Adrenal gland (tissue), 19 donors: ENCODE measurements at regions of chr22 and their contacts with region 1.

Region 1: DNA sequence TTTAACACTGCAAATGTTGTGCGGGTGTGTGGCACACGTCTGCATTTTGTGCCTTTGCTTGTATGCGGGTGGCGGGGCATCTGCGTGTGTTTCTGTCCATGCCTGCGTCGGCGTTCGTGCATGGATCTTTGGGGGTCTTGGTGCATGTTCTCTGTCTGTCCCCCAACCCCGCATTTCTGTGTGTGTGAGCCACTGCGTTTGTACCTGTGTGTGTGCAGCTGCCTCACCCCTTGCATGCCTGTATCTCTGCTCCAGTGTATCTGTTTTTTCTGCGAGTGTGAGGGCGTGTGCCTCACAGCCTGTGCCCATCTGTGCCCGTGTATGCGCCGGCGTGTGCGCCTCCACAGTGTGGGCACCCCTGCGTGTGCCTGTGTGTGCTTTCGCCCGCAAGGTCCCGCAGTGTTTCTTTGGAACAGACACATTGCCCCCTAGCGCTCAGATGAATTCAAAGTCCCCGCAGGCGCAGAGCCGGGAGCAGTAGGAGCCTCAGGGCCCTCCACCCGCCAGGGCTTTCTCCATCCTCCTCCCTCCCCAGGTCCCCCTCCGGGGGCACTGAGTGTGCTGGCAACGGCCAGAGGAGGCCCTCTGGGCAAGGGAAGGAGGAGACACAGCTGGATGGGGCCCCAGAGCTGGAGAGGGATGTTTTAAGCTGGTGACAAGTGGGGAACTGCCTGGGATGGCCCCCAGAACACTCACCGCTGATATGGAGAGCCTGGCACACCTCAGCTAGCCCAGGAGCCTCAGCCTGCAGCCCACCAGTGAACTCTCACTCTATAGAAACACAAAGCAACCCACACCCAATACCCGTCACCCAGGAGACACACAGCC is 3.1 kb upstream of the MN1 start:
- DNase-seq: peak; percentile 64 to 79 (median 75)
- H3K4me3 ChIP-seq: no peak overlapping the region
- H3K27ac ChIP-seq: no peak overlapping the region
- H3K4me1 ChIP-seq: peaks cover 0 to 21% of the 10 kb centered on the region in 2 donors
- H3K27me3 ChIP-seq: peaks cover 13% of the 10 kb centered on the region
- CTCF ChIP-seq: peak; percentile 35 to 73 (median 68)
- POLR2A ChIP-seq: no peak

Region 2: DNA sequence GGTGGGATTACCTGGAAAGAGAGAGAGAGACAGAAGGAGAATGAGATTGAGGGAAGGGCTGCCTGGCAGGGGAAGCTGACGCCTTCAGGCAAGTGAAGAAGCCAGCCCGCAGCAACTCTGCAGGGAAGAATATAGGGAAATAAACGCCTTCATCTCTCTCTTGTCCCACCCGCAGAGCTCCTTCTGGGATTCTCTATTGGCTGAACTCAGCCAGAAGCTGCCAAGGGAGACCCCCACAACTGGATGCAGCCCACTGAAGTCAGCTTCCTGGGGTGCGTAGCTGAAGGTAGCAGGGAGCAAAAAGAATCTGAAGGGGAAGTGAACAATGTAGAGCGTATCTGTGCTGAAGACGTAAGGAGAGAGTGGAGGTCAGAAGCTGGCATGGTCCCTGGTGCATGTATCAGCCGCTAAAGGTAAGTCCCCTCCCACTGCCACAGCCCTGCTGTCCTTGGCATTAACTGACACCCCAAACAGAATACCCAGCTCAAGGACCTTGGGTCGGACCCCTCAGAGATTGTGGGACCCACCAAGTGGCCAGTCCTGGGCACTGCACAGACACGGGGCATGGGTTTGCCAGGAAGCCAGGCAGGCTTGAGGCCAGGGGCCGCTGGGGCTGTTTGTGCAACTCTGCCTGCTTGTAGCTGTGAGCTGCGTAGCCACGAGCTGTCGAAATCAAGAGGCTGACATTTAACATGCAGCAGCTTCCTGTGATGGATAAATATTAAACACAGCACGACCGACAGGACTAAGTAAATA is 473.0 kb before region 1 on chr22:
- intact Hi-C with region 1: no loop called
- DNase-seq: peak in 5 of 7 donors; percentile 28 to 58 (median 52)
- H3K4me3 ChIP-seq: no peak overlapping the region
- H3K27ac ChIP-seq: no peak overlapping the region
- H3K4me1 ChIP-seq: no peaks in the 10 kb centered on the region
- H3K27me3 ChIP-seq: peaks cover 3% of the 10 kb centered on the region
- CTCF ChIP-seq: peak in 5 of 6 experiments; percentile 8 to 41 (median 29)
- POLR2A ChIP-seq: no peak

Region 3: DNA sequence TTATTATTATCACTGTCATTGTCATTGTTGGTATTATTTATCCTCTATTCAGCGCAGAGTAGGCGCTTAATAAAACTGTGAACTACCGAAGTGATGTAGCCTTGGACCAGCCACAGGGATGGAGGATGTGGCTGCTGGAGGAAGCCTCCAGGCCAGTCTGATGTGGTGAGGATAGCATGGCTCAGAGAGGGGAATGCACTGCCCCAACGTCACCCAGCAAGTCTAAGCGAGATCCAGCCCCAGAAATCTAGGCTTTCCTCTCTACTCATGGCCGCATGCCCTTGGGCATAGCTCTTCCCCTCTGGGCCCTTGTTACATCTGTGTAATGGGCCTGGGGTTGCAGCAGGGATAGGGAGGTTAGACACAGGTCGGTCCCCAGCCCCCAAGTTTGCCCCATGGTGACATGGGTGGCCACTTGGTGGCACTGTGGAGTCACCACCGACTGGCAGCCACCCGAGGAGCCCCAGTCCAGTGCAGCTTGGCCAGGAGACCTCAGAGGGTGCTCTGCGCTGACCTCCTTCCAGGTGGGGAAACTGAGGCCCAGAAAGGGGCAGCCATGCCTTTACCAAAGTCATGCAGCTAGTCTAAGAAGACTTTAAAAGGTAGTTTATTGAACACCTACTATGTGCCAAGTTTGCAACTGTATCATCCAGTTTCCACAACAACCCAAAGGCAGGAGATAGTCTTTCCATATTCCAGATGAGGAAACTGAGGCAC is 398.9 kb before region 1 on chr22:
- intact Hi-C with region 1: loop called (anchors 5 kb)
- DNase-seq: peak; percentile 27 to 72 (median 57)
- H3K4me3 ChIP-seq: no peak overlapping the region
- H3K27ac ChIP-seq: no peak overlapping the region
- H3K4me1 ChIP-seq: no peaks in the 10 kb centered on the region
- H3K27me3 ChIP-seq: peaks cover 12% of the 10 kb centered on the region
- CTCF ChIP-seq: peak; percentile 60 to 73 (median 68)
- POLR2A ChIP-seq: no peak

Region 4: GRCh38 chr22:27531782-27532530 is 272.7 kb before region 1 on chr22:
- intact Hi-C with region 1: no loop called
- DNase-seq: no peak
- H3K4me3 ChIP-seq: no peak overlapping the region
- H3K27ac ChIP-seq: no peak overlapping the region
- H3K4me1 ChIP-seq: no peaks in the 10 kb centered on the region
- H3K27me3 ChIP-seq: no peaks in the 10 kb centered on the region
- CTCF ChIP-seq: no peak
- POLR2A ChIP-seq: no peak

Region 5: GRCh38 chr22:27880778-27881394 is 76.2 kb after region 1 on chr22:
- intact Hi-C with region 1: no loop called
- DNase-seq: peak in 6 of 7 donors; percentile 34 to 72 (median 60)
- H3K4me3 ChIP-seq: no peak overlapping the region
- H3K27ac ChIP-seq: peak overlapping the region in 2 of 5 donors; percentile 15 to 63
- H3K4me1 ChIP-seq: peaks cover 3 to 42% of the 10 kb centered on the region in 2 donors
- H3K27me3 ChIP-seq: no peaks in the 10 kb centered on the region
- CTCF ChIP-seq: peak; percentile 71 to 86 (median 79)
- POLR2A ChIP-seq: no peak